Cardiac septum (tissue), 1 donor: ENCODE measurements at regions of chr2 and their contacts with region 1.

Region 1: DNA sequence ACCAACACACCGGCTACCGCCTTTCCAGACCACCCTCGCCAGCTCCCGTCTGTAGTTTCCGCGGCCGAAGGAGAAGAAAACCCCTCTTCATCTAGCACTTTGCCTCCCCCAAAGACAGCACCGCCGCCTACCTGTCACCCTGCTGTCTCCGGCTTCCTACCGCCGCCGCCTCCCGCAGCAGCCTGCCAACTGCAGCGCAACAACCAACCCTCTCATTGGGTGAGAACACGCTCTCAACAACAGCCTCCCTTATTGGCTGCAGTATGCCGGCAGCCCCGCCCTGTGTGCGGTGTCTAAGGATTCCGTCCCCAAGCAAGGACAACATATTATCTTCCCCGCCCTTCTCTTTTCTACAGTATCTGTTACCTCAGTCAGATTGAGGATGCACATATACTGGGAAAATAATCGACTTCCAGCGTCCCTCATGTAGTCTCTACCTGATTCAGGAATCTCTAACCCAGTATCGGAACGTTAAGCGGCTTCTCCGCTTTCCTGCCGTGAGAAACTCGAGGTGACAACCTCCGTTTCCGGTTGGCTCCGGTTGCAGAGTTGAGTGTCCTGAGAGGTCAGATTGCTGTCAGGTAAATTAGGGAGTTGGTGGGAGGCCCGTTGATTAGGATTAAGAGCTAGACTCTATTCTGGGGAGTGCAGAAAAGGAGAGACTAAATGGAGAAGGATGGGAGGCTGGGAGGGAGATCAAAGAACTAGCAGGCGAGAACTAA is at the starts of genes HYCC2 and NDUFB3:
- DNase-seq: peak; percentile 96
- total RNA-seq, gene HYCC2: 14.2 TPM
- total RNA-seq, gene NDUFB3: 278 TPM

Region 2: DNA sequence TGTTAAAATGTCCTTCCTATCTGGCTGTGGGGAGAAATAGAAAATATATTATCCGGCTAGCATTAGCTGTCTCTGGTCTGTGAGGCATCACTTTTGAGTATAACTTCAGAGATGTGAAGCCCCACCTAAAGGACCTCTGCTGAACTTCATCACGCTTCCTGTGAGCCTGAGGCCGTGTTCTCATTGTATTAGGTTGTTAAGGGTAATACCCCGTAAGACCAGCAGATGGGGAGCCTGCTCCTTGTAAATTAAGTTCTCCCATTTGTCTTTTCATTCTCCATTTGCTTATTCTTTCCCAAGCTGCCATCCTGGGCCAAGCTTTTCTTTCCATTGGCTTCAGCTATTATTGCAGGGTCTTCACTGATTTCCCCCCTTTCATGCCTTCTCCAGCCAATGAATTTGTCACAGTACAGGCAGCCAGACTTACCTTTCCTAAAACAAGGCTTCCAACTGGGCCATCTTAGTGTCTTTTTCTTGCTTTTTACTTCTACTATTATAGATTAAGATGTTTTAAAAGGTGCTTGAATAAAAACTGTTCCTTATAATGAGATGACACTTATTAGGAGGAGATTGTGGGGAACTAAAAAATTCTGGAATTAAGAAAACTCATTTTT is 170.1 kb before region 1 on chr2:
- intact Hi-C with region 1: loop called (anchors 1 kb)
- DNase-seq: no peak

Region 3: GRCh38 chr2:200950378-200950777 is 121.3 kb before region 1 on chr2:
- intact Hi-C with region 1: no loop called
- DNase-seq: no peak

Region 4: DNA sequence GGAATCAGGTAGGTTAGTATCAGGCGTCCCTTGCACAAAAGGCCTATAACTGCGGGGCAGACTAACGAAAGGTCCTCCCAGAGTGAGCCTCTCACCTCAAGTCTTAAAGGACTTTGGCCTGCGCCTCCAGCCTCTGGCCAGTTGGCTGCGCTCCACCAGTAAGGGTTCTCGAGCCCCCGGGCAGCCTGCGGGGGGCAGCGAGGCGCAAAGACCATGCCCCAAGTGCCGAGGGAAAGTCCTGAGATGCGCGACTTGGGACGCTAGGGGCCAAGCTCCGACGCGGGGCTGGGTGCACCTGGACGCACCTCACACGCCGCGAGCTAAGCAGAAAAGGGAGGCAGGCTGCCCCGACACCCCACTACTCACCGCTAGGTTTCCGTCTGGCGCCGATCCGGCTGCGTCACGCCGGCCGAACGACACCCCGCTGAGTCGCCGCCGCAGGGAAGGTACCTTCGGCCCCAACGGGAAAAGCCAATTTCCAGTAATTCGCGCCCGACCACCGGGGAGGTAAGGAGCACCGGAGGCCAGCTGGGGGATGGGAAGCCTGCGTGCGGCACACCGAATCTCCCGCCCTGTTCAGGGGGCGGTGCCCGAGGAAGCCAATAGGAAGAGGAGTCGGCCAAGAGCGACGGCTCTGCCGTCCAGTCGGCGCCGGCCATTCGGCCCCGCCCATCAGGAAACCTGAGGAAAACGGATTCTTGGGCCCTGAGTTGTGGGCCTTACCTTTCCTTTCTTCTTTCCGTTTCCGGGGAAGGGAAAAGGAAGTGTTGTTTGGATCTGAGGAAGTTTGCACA is 108.3 kb before region 1 on chr2 and contains the start of gene ORC2:
- intact Hi-C with region 1: loop called (anchors 2 kb)
- DNase-seq: peak; percentile 97
- total RNA-seq, gene ORC2: 24.9 TPM

Region 5: DNA sequence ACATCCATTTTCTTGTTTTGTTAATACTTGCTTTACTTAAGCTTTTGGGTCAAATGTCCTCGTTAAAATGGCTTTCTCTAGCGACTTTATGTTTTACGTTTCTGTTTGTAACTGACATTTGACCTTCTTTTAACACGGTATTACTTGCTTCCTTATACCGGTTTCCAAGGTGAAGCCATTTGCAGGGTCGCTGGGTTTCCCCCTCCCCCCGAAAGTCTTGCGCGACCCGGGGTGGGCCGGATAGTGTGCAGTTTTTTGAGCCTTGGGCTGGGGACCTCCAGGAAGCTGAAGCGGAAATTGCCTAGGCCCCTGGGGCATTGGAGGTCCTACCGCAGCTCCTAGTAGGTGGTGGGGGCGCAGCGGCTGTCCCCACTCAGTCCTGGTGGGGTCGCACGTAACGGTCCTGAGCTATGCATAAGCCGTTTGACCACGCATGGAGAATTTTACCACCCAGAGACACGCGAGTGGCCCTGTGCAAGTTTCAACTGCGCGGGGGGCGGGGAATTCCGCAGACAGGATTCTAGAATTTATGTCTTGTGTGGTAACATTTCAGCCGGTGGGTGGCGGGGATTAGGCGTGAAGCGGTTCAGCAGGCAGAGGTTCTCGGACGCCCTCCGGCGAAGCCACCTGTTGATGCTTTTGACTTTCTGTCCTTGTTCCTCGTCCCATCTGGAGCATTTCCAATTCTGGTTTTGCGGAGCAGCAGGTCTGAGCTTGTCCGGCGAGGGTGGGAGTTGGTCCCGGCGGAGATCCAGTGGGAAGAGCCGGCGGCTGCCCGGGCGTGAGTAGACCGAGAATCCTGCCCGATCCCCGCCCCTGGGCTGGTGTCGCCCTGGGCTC is 46.7 kb after region 1 on chr2:
- intact Hi-C with region 1: loop called (anchors 2 kb)
- DNase-seq: peak; percentile 95

Region 6: GRCh38 chr2:201158111-201158929 is 86.7 kb after region 1 on chr2:
- intact Hi-C with region 1: loop called (anchors 5 kb)
- DNase-seq: peak; percentile 91